ENCODE measurements at regions of chr21 and their contacts with region 1.

Region 1: DNA sequence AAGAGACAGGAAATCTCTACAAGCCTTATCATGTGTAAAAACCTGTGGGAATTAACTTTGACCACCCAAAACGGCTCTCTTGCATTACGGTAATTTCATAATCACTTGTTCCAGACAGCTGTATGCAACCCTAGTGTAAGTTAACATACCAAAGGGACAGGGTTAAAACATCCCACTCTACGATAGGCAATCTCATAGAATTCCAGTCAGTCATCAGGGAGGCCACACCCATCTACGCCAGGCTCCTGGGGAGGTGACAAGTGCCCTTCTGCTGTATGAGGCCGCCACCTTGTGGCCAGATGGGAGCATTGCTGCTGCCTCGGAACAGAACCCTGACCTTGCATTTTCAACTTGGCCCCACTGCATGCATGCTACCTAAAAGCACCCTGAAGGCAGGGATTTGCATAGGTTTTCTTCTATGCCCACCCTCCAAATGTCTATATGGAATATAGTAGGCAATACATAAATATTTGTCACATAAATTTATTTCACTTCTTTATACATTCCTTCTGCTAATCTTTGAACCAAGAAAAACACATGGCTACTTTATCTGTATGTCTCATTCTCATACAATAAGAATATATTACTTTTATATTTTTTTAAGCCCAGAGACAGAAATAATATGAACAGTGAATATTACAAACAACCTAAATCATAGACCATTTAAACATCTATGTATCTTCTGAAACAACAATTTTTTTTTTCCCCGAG is 12.6 kb downstream of the HSF2BP start:
- DNase-seq: peak; percentile 93
- H3K4me3 ChIP-seq: no peak overlapping the region
- H3K27ac ChIP-seq: no peak overlapping the region
- H3K4me1 ChIP-seq: peaks cover 15% of the 10 kb centered on the region
- H3K27me3 ChIP-seq: no peaks in the 10 kb centered on the region
- CTCF ChIP-seq: peak; percentile 99

Region 2: DNA sequence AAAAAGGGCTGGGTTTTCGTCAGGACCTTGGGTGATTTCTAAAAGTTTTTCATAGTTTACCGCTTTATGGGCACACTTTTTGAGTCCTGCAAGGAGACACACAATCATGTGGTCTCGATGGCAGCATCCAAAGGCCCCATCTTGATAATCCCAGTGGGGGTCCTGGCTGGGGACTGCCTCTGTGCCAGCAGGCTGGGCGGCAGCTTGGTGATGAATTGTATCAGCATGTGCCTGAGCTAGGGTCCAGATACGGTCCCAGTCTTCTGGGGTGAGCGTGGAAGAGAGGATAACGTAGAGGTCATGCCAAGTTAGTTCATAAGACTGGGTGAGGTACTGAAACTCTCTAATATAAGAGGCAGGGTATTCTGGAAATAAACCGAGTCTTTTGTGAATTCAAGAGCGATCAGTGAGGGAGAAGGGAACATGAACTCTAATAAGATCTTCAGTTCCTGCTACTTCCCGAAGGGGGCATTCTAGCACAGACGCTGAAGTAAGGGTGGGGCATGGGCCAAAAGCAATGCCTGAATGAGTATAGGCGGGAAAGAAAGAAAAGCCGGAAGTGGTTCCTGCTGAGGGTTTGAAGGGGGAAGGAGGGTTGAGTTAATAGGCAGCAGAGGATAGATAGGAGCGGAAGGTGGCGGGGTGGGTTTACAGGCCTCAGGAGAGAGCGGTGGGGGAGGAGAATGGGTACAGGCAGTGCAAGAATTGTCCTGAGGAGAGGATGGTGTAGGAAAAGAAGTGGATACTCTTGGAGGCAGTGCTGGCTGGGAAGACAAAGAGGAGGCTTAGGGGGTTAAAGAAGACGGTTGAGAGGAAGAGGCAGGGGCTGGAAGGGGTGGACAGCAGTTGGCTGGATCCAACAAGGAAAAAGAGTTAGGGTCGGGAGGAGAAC is 722.9 kb before region 1 on chr21:
- CTCF ChIA-PET with region 1: no interaction called
- POLR2A ChIA-PET with region 1: no interaction called
- intact Hi-C with region 1: loop called (anchors 2 kb)
- DNase-seq: peak; percentile 99
- H3K4me3 ChIP-seq: no peak overlapping the region
- H3K27ac ChIP-seq: peak overlapping the region; percentile 70
- H3K4me1 ChIP-seq: peaks cover 19% of the 10 kb centered on the region
- H3K27me3 ChIP-seq: no peaks in the 10 kb centered on the region
- CTCF ChIP-seq: peak; percentile 87

Region 3: GRCh38 chr21:43318841-43319781 is 327.6 kb before region 1 on chr21:
- CTCF ChIA-PET with region 1: no interaction called
- POLR2A ChIA-PET with region 1: no interaction called
- intact Hi-C with region 1: loop called (anchors 10 kb)
- DNase-seq: peak; percentile 41
- H3K4me3 ChIP-seq: no peak overlapping the region
- H3K27ac ChIP-seq: no peak overlapping the region
- H3K4me1 ChIP-seq: no peaks in the 10 kb centered on the region
- H3K27me3 ChIP-seq: no peaks in the 10 kb centered on the region
- CTCF ChIP-seq: no peak

Measured in A673 (cell line).